ENCODE measurements at regions of chr11 and their contacts with region 1.

Region 1: DNA sequence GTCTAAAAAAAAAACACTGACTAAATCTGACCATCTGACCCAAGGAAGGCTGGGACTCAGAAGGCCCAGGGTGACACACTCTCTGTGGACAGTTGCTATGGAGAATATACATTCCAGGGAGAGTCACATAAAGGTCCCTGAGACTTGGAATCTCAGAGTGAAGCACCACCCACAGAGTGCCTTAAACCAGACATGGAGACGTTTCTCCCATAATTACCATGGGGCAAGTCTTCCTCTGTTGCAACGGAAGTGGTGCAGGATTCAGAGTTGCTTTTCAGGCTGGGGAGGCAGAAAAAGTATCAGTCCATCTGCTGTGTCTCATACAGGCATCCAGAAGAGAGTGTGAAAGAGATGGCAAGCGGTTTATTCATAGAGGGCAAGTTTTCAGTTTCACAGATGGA is 58.7 kb upstream of the SLN start:
- DNase-seq: peak; percentile 23 to 48
- H3K4me3 ChIP-seq: no peak overlapping the region
- H3K27ac ChIP-seq: no peak overlapping the region
- H3K4me1 ChIP-seq: no peaks in the 10 kb centered on the region
- H3K27me3 ChIP-seq: no peaks in the 10 kb centered on the region
- CTCF ChIP-seq: no peak

Region 2: GRCh38 chr11:107493117-107493516 is 277.4 kb before region 1 on chr11:
- CTCF ChIA-PET with region 1: no interaction called
- POLR2A ChIA-PET with region 1: no interaction called
- intact Hi-C with region 1: no loop called
- DNase-seq: peak; percentile 16 to 65
- H3K4me3 ChIP-seq: no peak overlapping the region
- H3K27ac ChIP-seq: no peak overlapping the region
- H3K4me1 ChIP-seq: peaks cover 17% of the 10 kb centered on the region
- H3K27me3 ChIP-seq: no peaks in the 10 kb centered on the region
- CTCF ChIP-seq: no peak

Region 3: DNA sequence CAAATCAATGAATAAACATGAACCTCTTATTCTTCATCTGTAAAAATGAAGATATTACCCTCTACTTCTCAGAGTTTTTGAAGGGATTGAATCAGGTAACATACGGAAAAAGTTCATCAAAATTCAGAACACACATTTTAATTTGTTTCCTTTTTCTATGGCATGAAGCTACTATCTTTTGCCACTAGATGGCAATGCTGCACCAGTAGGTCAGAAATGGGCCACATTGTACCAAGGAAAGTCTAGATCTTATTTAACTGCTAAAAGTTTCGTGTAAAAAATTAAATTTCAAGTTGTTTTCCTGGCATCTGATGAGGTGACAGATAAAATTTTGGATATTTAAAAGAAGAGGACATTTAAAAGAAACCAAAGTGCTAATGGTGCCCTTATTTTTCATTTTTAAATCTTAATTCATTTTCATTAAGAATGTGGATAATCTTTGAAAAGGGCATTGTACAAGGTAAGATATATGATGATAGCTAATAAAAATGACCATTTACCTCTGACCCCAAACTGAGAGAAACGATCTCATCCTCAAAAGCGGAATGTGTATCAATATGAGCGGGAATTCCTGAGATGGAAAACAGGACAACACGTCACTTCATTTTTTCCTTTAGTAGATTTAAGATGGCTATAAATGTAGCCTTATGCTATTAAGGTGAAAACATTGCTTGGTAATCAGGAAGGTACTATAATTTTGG is 221.1 kb before region 1 on chr11:
- CTCF ChIA-PET with region 1: no interaction called
- POLR2A ChIA-PET with region 1: no interaction called
- intact Hi-C with region 1: loop called (anchors 5 kb)
- DNase-seq: no peak
- H3K4me3 ChIP-seq: no peak overlapping the region
- H3K27ac ChIP-seq: no peak overlapping the region
- H3K4me1 ChIP-seq: peaks cover 10% of the 10 kb centered on the region
- H3K27me3 ChIP-seq: no peaks in the 10 kb centered on the region
- CTCF ChIP-seq: peak; percentile 92

Region 4: DNA sequence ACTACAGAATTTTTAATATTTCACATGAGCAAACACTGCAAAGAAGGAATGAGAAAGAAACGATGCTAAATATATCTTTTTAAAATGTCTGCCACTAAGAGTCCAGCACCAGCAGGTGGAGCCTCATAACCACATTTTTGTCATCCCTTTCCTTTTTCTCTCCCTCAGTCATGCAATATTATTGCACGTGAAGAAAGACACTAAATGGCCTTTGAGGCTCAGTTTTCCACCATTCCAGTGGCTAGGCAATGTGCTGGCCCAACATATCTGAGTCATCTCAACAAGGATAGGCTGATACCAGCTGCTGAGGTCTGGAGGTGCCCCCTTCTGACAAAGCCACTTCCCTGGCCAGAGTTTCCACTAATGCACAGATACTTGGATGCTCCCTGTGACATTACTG is 206.8 kb before region 1 on chr11:
- CTCF ChIA-PET with region 1: interaction called, 4 read pairs
- POLR2A ChIA-PET with region 1: no interaction called
- intact Hi-C with region 1: loop called (anchors 1 kb)
- DNase-seq: peak; percentile 20 to 60
- H3K4me3 ChIP-seq: peak overlapping the region; percentile 83; the same call in 1 of the 2 replicates
- H3K27ac ChIP-seq: peak overlapping the region; percentile 87
- H3K4me1 ChIP-seq: peaks cover 47% of the 10 kb centered on the region
- H3K27me3 ChIP-seq: no peaks in the 10 kb centered on the region
- CTCF ChIP-seq: peak; percentile 85

Region 5: DNA sequence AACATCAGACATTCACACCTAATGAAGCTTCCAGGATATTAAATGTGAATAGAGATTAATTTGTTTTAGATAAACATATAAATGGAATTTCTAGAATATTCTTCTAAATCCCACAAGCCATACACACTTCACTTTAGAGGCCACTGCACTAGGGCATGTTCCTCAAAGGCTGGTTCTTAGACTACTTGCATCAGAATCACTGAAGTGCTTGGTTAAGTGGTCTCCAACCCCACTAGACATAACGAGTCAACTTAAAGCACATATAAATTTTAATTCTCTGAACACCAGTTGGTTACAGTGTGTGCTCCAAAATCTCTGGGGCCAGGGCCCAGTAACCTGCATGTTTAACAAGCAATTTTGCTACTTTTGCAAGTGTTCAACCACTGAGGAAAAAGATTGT is 197.1 kb before region 1 on chr11:
- CTCF ChIA-PET with region 1: no interaction called
- POLR2A ChIA-PET with region 1: no interaction called
- intact Hi-C with region 1: loop called (anchors 2 kb)
- DNase-seq: no peak
- H3K4me3 ChIP-seq: no peak overlapping the region
- H3K27ac ChIP-seq: no peak overlapping the region
- H3K4me1 ChIP-seq: peaks cover 4% of the 10 kb centered on the region; the same call in 1 of the 2 replicates
- H3K27me3 ChIP-seq: no peaks in the 10 kb centered on the region
- CTCF ChIP-seq: no peak

Region 6: GRCh38 chr11:107689317-107690202 is 81.0 kb before region 1 on chr11:
- CTCF ChIA-PET with region 1: interaction called, 3 read pairs
- POLR2A ChIA-PET with region 1: no interaction called
- intact Hi-C with region 1: loop called (anchors 5 kb)
- DNase-seq: peak; percentile 50 to 51
- H3K4me3 ChIP-seq: no peak overlapping the region
- H3K27ac ChIP-seq: no peak overlapping the region
- H3K4me1 ChIP-seq: no peaks in the 10 kb centered on the region
- H3K27me3 ChIP-seq: no peaks in the 10 kb centered on the region
- CTCF ChIP-seq: peak; percentile 91

Region 7: DNA sequence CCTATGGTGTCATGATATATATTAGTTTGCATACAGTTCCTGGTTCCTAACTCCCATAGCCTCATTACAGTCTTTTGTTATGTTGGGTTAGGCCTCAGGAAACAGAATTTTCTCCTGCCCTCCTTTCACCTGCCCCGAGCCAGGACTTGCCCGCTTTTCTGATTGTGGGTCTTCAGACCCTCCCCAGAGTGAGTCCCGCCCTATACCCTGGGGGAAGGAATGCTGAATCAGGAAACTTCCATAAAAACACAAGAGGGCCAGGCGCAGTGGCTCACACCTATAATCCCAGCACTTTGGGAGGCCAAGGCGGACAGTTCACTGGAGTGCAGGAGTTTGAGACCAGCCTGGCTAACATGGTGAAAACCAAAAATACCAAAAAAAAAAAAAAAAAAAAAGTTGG is 17.2 kb after region 1 on chr11:
- CTCF ChIA-PET with region 1: interaction called, 13 read pairs
- POLR2A ChIA-PET with region 1: no interaction called
- intact Hi-C with region 1: loop called (anchors 1 kb)
- DNase-seq: peak in 1 of 2 experiments; percentile 13
- H3K4me3 ChIP-seq: no peak overlapping the region
- H3K27ac ChIP-seq: peak overlapping the region; percentile 61
- H3K4me1 ChIP-seq: peaks cover 31% of the 10 kb centered on the region
- H3K27me3 ChIP-seq: no peaks in the 10 kb centered on the region
- CTCF ChIP-seq: no peak

Region 8: GRCh38 chr11:107799218-107799859 is 28.8 kb after region 1 on chr11:
- CTCF ChIA-PET with region 1: no interaction called
- POLR2A ChIA-PET with region 1: interaction called, 13 read pairs
- intact Hi-C with region 1: no loop called
- DNase-seq: peak; percentile 65 to 72
- H3K4me3 ChIP-seq: no peak overlapping the region
- H3K27ac ChIP-seq: no peak overlapping the region
- H3K4me1 ChIP-seq: no peaks in the 10 kb centered on the region
- H3K27me3 ChIP-seq: no peaks in the 10 kb centered on the region
- CTCF ChIP-seq: peak; percentile 99